Posterior cingulate gyrus (tissue), 11 donors: ENCODE measurements at regions of chr12 and their contacts with region 1.

Region 1: DNA sequence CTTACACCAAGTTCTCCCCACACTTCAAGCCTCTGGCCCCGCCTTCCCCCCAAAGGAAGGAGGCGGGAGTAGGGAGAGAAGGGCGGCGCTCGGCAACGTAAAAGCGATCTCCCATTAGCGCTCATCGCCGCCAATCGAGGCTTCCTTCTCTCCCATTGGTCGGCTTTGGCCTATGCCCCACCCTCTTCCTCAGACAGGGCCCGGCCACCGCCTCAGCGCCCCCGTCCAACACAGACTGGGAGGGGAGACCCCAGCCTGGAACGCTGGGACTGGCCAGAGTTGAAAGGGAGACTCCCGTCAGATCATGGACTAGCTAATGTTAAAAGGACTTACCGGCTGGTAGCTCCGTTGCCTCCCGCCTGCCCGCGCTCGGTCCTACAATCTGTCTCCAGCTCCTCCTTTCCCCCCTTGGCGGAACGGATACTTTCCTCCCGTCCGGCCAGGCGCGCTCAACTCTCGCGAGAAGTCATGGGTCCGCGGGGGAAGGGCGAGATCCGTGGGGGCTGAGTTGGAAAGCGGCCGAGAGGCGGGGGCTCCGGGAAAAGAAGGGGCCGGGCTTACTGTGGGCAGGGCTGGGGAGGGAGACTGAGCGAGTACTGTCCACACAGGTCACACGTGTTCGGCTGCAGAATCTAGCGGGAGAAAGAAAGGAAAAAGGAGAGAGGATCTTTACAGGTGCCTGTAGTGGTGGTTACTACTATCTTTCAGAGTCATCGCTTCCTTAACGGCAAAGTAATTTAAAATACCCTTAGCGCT is at the start of gene ATF7:
- DNase-seq: peak; percentile 97 to 100 (median 98)

Region 2: DNA sequence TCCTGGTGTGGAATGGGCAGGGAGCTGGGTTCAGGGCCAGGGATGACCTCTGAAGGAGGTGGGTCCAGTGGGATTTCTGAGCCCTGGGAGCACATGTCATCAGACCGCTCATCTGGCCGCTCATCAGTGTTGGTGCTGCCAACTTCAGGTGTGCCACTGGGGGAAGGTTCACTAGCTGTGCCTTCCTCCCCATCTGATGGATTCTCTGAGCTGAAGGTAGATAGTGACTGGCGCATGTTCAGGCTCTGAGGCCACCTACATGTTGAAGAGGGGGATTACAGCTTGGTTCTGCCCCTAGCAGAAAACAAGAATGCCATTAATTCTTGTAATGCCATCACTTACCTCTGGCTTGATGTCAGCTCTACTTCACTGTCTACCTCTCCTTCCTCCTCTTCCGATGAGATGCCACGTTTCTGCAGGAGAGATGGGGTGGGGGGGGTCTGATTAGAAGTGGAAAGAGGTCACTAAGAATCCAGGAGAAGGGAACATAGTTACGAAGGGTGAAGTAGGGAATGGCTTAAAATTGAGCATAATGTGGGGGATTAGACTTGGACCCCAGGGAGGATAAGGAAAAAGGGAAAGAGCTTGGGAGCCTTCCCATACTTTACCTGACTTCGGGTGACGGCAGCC is 144.1 kb before region 1 on chr12:
- intact Hi-C with region 1: no loop called
- DNase-seq: peak in 1 of 10 donors; percentile 63

Region 3: DNA sequence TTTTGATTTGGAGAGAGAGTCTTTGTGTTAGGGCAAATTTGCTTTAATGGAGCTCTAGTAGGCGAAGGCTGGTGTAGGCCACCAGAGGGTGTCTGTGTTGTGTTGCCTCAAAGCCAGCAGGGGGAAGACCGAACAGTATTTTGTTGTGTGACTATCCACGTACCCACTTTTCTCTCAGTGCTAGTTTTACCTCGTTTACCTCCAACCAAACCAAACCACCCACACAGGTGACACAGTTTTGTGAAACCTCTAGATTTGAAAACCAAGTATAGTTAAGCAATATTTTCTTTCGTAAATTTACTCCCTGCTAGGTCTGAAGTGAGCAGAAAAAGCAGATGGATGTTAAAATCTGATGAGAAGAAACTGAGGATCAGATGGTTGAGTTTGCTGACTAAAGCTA is 82.6 kb before region 1 on chr12:
- intact Hi-C with region 1: loop called (anchors 10 kb)
- DNase-seq: peak; percentile 45 to 95 (median 68)

Region 4: DNA sequence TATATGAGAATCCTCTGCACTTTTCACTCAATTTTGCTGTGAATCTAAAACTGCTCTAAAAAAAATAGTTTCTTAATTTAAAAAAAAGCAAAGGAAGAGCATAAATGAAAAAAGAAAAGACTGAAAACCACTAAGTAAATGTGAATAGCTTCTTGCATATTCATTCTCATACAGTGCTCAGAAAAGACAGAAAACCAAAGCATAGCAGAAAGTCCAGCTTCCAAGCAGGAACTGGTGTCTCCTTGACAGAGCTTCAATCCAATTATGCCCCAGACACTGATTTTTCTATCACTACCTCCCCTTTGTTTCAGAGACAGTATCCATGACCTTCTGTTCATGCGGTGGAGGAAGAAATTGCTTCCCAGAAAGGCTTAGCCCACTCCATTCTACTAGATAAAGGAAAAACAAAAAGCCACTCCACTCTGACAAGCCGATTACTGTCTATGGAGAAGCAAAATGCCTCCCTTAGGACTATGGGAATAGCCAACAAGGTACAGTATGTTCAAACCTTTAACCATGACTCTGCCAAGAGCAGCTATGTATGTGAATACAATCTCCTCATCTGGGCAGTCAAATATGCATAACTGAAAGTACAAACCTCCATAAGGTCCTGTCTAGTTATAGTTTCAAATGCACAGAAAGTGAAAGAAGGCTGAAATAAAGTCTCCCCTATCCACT is 40.5 kb before region 1 on chr12:
- intact Hi-C with region 1: no loop called
- DNase-seq: no peak